AG04449 (cell line): ENCODE measurements at regions of chr7 and their contacts with region 1.

Region 1: GRCh38 chr7:134547397-134548054 is 1.4 kb upstream of the AKR1B15 start:
- DNase-seq: no peak
- H3K4me3 ChIP-seq: peak overlapping the region; percentile 57
- CTCF ChIP-seq: peak; percentile 65

Region 2: DNA sequence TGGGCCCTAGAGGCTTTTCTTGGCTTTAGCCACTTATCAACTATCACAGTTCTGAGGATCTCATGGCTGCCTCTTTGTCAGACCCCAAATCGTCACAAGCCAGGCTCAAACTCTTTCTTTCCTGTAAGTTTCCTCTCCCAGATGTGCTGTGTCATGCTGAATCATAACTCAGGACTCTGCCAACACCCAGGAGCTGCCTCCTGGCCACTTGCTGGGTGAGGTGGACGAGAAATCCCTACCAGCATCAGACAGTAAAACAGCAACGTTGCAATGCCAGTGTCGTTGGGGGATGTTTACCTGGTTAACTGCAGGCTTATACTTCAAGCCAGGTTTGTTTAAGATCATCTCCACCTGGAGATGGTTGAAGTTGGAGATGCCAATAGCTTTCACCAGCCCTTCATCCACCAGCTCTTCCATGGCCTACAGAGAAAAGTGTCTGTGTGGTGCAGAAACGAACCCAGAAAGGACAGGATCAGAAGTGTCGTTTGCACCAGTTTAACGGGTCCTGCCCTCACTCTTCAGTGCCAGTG is 98.8 kb before region 1 on chr7:
- CTCF ChIA-PET with region 1: interaction called, 20 read pairs
- POLR2A ChIA-PET with region 1: no interaction called
- DNase-seq: peak; percentile 60
- H3K4me3 ChIP-seq: no peak overlapping the region
- CTCF ChIP-seq: no peak

Region 3: GRCh38 chr7:134527979-134528371 is 19.6 kb before region 1 on chr7:
- CTCF ChIA-PET with region 1: interaction called, 57 read pairs
- POLR2A ChIA-PET with region 1: no interaction called
- DNase-seq: peak; percentile 64
- H3K4me3 ChIP-seq: peak overlapping the region; percentile 33; the same call in 1 of the 2 replicates
- CTCF ChIP-seq: no peak

Region 4: GRCh38 chr7:134533288-134533771 is 14.2 kb before region 1 on chr7:
- CTCF ChIA-PET with region 1: interaction called, 57 read pairs
- POLR2A ChIA-PET with region 1: no interaction called
- DNase-seq: no peak
- H3K4me3 ChIP-seq: no peak overlapping the region
- CTCF ChIP-seq: no peak

Region 5: GRCh38 chr7:134562136-134562535 is 14.6 kb after region 1 on chr7:
- CTCF ChIA-PET with region 1: interaction called, 67 read pairs
- POLR2A ChIA-PET with region 1: no interaction called
- DNase-seq: peak; percentile 45
- H3K4me3 ChIP-seq: no peak overlapping the region
- CTCF ChIP-seq: no peak

Region 6: GRCh38 chr7:134599371-134599770 is 51.8 kb after region 1 on chr7:
- CTCF ChIA-PET with region 1: interaction called, 14 read pairs
- POLR2A ChIA-PET with region 1: no interaction called
- DNase-seq: no peak
- H3K4me3 ChIP-seq: no peak overlapping the region
- CTCF ChIP-seq: no peak